ENCODE measurements at regions of chr16 and their contacts with region 1.

Region 1: GRCh38 chr16:57734925-57735754 is 430 bp upstream of the KATNB1 start:
- DNase-seq: peak; percentile 99
- ATAC-seq: peak; percentile 95
- H3K4me3 ChIP-seq: peak overlapping the region; percentile 83
- H3K27ac ChIP-seq: peak overlapping the region; percentile 96
- H3K4me1 ChIP-seq: peaks cover 10% of the 10 kb centered on the region
- H3K27me3 ChIP-seq: no peaks in the 10 kb centered on the region
- CTCF ChIP-seq: no peak
- EP300 ChIP-seq: no peak
- POLR2A ChIP-seq: peak; percentile 75
- RAD21 ChIP-seq: no peak

Region 2: GRCh38 chr16:57648590-57649442 is 86.3 kb before region 1 on chr16:
- CTCF ChIA-PET with region 1: interaction called, 5 read pairs
- POLR2A ChIA-PET with region 1: no interaction called
- RAD21 ChIA-PET with region 1: interaction called, 18 read pairs
- SMC1A ChIA-PET with region 1: interaction called, 3 read pairs
- in situ Hi-C with region 1: no loop called
- intact Hi-C with region 1: no loop called
- DNase-seq: peak; percentile 52
- ATAC-seq: peak; percentile 83
- H3K4me3 ChIP-seq: no peak overlapping the region
- H3K27ac ChIP-seq: peak overlapping the region; percentile 13; the same call in 1 of the 2 replicates
- H3K4me1 ChIP-seq: peaks cover 19% of the 10 kb centered on the region
- H3K27me3 ChIP-seq: no peaks in the 10 kb centered on the region
- CTCF ChIP-seq: peak; percentile 100; a peak in 5 of 6 replicates
- EP300 ChIP-seq: no peak
- POLR2A ChIP-seq: no peak
- RAD21 ChIP-seq: peak; percentile 99

Region 3: GRCh38 chr16:57689762-57690558 is 45.2 kb before region 1 on chr16:
- CTCF ChIA-PET with region 1: no interaction called
- POLR2A ChIA-PET with region 1: interaction called, 10 read pairs
- RAD21 ChIA-PET with region 1: interaction called, 3 read pairs
- SMC1A ChIA-PET with region 1: interaction called, 3 read pairs
- in situ Hi-C with region 1: no loop called
- intact Hi-C with region 1: loop called (anchors 2 kb)
- DNase-seq: peak; percentile 57
- ATAC-seq: peak; percentile 88
- H3K4me3 ChIP-seq: 0 out of 2 replicates have a peak overlapping the region, but pooled peaks have one; percentile 6
- H3K27ac ChIP-seq: no peak overlapping the region
- H3K4me1 ChIP-seq: peaks cover 17% of the 10 kb centered on the region
- H3K27me3 ChIP-seq: no peaks in the 10 kb centered on the region
- CTCF ChIP-seq: no peak
- EP300 ChIP-seq: no peak; a peak in 1 of 4 replicates
- POLR2A ChIP-seq: peak; percentile 61
- RAD21 ChIP-seq: no peak